ENCODE measurements at regions of chr15 and their contacts with region 1.

Region 1: DNA sequence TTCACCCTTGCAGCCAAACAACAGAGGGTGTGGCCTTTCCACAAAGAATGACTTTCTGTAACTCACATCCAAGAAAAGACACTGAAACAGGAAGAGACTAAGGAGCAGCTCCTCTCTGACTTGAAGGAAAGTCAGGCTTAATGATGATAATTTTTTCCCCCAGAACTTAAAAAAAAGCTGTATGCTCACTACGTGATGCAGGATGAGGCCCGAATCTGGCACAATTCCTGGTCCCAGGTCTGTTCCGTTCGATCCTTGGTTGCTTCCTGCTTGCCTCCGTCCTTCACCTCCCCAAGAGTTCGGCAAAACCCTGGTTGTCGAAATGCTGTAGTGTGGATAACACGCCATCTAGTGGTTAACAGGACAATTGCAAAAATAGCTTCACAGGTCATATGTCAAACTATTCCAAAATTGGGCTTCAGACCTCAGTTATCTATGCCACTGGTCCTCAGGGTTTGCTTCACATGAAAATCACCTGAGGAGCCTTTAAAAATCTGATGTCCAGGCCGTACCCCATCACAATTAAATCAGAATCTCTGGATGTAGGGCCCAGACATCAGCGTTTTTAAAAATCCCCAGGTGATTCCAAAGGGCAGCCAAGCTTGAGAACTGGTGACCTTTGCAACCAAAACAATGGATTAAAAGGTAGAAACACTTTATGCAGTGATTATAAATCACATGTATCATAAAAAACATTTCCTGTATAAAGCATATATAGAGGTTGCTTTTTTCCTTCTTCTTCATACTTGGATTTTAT is 28.1 kb upstream of the SYNM start:
- DNase-seq: peak; percentile 74
- ATAC-seq: peak; percentile 90
- H3K4me3 ChIP-seq: peak overlapping the region; percentile 46
- H3K27ac ChIP-seq: peak overlapping the region; percentile 47
- H3K4me1 ChIP-seq: peaks cover 7% of the 10 kb centered on the region
- H3K27me3 ChIP-seq: no peaks in the 10 kb centered on the region
- CTCF ChIP-seq: peak; percentile 82 to 94 (median 93)
- EP300 ChIP-seq: no peak
- POLR2A ChIP-seq: no peak
- RAD21 ChIP-seq: peak; percentile 99

Region 2: GRCh38 chr15:98442379-98442833 is 634.3 kb before region 1 on chr15:
- CTCF ChIA-PET with region 1: interaction called, 7 read pairs
- POLR2A ChIA-PET with region 1: no interaction called
- RAD21 ChIA-PET with region 1: interaction called, 3 read pairs
- SMC1A ChIA-PET with region 1: interaction called, 3 read pairs
- in situ Hi-C with region 1: loop called (anchors 5 kb)
- intact Hi-C with region 1: loop called (anchors 1 kb)
- DNase-seq: no peak
- ATAC-seq: peak; percentile 90
- H3K4me3 ChIP-seq: no peak overlapping the region
- H3K27ac ChIP-seq: no peak overlapping the region
- H3K4me1 ChIP-seq: peaks cover 3% of the 10 kb centered on the region; the same call in 1 of the 2 replicates
- H3K27me3 ChIP-seq: no peaks in the 10 kb centered on the region; a peak in 1 of 4 replicates
- CTCF ChIP-seq: peak; percentile 80 to 83 (median 82)
- EP300 ChIP-seq: no peak
- POLR2A ChIP-seq: no peak
- RAD21 ChIP-seq: peak; percentile 58

Region 3: GRCh38 chr15:98658831-98659699 is 417.7 kb before region 1 on chr15:
- CTCF ChIA-PET with region 1: interaction called, 15 read pairs
- POLR2A ChIA-PET with region 1: no interaction called
- RAD21 ChIA-PET with region 1: interaction called, 11 read pairs
- SMC1A ChIA-PET with region 1: interaction called, 12 read pairs
- in situ Hi-C with region 1: loop called (anchors 10 kb)
- intact Hi-C with region 1: no loop called
- DNase-seq: peak; percentile 11
- ATAC-seq: peak; percentile 96
- H3K4me3 ChIP-seq: no peak overlapping the region
- H3K27ac ChIP-seq: no peak overlapping the region
- H3K4me1 ChIP-seq: no peaks in the 10 kb centered on the region
- H3K27me3 ChIP-seq: no peaks in the 10 kb centered on the region
- CTCF ChIP-seq: peak; percentile 85 to 91 (median 87); a peak in 5 of 6 replicates
- EP300 ChIP-seq: no peak
- POLR2A ChIP-seq: no peak
- RAD21 ChIP-seq: peak; percentile 76

Region 4: GRCh38 chr15:98881526-98882520 is 194.9 kb before region 1 on chr15:
- CTCF ChIA-PET with region 1: interaction called, 76 read pairs
- POLR2A ChIA-PET with region 1: interaction called, 3 read pairs
- RAD21 ChIA-PET with region 1: interaction called, 30 read pairs
- SMC1A ChIA-PET with region 1: interaction called, 12 read pairs
- in situ Hi-C with region 1: no loop called
- intact Hi-C with region 1: loop called (anchors 2 kb)
- DNase-seq: no peak
- ATAC-seq: peak; percentile 85
- H3K4me3 ChIP-seq: no peak overlapping the region
- H3K27ac ChIP-seq: no peak overlapping the region
- H3K4me1 ChIP-seq: no peaks in the 10 kb centered on the region
- H3K27me3 ChIP-seq: no peaks in the 10 kb centered on the region
- CTCF ChIP-seq: peak; percentile 50 to 58 (median 53); a peak in 5 of 6 replicates
- EP300 ChIP-seq: no peak
- POLR2A ChIP-seq: no peak
- RAD21 ChIP-seq: peak; percentile 50

Region 5: DNA sequence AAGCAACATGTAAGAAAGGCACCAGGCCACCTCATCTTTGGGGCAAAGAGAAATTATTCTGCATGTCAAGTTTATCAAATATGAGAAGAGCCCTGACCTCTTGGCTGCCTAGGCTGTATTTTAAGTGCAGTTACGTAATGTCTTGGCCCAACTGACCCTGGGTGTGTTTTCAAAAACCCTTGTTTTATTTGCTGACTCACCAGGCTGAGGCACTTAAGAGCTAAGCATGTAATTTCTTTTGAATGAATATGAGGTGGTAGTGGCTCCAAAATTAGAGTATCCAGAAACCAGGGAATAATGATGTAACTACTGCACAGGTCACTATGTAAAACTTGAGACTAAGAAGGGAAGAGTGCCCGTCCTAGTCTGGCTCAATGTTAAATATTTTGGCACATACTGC is 93.4 kb before region 1 on chr15:
- CTCF ChIA-PET with region 1: interaction called, 3 read pairs
- POLR2A ChIA-PET with region 1: no interaction called
- RAD21 ChIA-PET with region 1: no interaction called
- SMC1A ChIA-PET with region 1: interaction called, 6 read pairs
- in situ Hi-C with region 1: no loop called
- intact Hi-C with region 1: loop called (anchors 1 kb)
- DNase-seq: no peak
- ATAC-seq: no peak
- H3K4me3 ChIP-seq: no peak overlapping the region
- H3K27ac ChIP-seq: no peak overlapping the region
- H3K4me1 ChIP-seq: peaks cover 22% of the 10 kb centered on the region
- H3K27me3 ChIP-seq: no peaks in the 10 kb centered on the region
- CTCF ChIP-seq: no peak
- EP300 ChIP-seq: no peak
- POLR2A ChIP-seq: no peak
- RAD21 ChIP-seq: no peak

Region 6: GRCh38 chr15:99002226-99002625 is 74.5 kb before region 1 on chr15:
- CTCF ChIA-PET with region 1: no interaction called
- POLR2A ChIA-PET with region 1: no interaction called
- RAD21 ChIA-PET with region 1: no interaction called
- SMC1A ChIA-PET with region 1: no interaction called
- in situ Hi-C with region 1: no loop called
- intact Hi-C with region 1: no loop called
- DNase-seq: no peak
- ATAC-seq: no peak
- H3K4me3 ChIP-seq: no peak overlapping the region
- H3K27ac ChIP-seq: no peak overlapping the region
- H3K4me1 ChIP-seq: no peaks in the 10 kb centered on the region
- H3K27me3 ChIP-seq: no peaks in the 10 kb centered on the region
- CTCF ChIP-seq: no peak
- EP300 ChIP-seq: no peak
- POLR2A ChIP-seq: no peak
- RAD21 ChIP-seq: no peak

Region 7: GRCh38 chr15:99104788-99105513 is 28.2 kb after region 1 on chr15 and contains the start of gene SYNM:
- CTCF ChIA-PET with region 1: interaction called, 15 read pairs
- POLR2A ChIA-PET with region 1: no interaction called
- RAD21 ChIA-PET with region 1: interaction called, 6 read pairs
- SMC1A ChIA-PET with region 1: interaction called, 9 read pairs
- in situ Hi-C with region 1: no loop called
- intact Hi-C with region 1: no loop called
- DNase-seq: no peak
- ATAC-seq: peak; percentile 85
- H3K4me3 ChIP-seq: peak within 1 kb of the TSS; percentile 65
- H3K27ac ChIP-seq: no peak within 1 kb of the TSS
- H3K4me1 ChIP-seq: peaks cover 14% of the 10 kb centered on the region
- H3K27me3 ChIP-seq: peaks cover 0 to 10% of the 10 kb centered on the region in 2 experiments; a peak in 1 of 4 replicates
- CTCF ChIP-seq: peak; percentile 56 to 68 (median 67); a peak in 5 of 6 replicates
- EP300 ChIP-seq: no peak
- POLR2A ChIP-seq: peak; percentile 48; the same call in 1 of the 2 replicates
- RAD21 ChIP-seq: peak; percentile 68
- polyA plus RNA-seq, gene SYNM: 0.14 to 0.31 TPM

Measured in GM12878 (cell line).